ENCODE measurements at regions of chr12 and their contacts with region 1.

Region 1: GRCh38 chr12:111396726-111397445 is 8.8 kb upstream of the SH2B3 start:
- DNase-seq: peak; percentile 78 to 93 (median 86)
- ATAC-seq: peak; percentile 97
- H3K4me3 ChIP-seq: peak overlapping the region; percentile 5
- H3K4me3 Mint-ChIP-seq: peak overlapping the region; percentile 56
- H3K27ac ChIP-seq: no peak overlapping the region
- H3K27ac Mint-ChIP-seq: no peak overlapping the region
- H3K4me1 ChIP-seq: peaks cover 8% of the 10 kb centered on the region
- H3K4me1 Mint-ChIP-seq: peaks cover 5% of the 10 kb centered on the region
- H3K27me3 ChIP-seq: no peaks in the 10 kb centered on the region
- H3K27me3 Mint-ChIP-seq: no peaks in the 10 kb centered on the region
- CTCF ChIP-seq: peak; percentile 97

Region 2: DNA sequence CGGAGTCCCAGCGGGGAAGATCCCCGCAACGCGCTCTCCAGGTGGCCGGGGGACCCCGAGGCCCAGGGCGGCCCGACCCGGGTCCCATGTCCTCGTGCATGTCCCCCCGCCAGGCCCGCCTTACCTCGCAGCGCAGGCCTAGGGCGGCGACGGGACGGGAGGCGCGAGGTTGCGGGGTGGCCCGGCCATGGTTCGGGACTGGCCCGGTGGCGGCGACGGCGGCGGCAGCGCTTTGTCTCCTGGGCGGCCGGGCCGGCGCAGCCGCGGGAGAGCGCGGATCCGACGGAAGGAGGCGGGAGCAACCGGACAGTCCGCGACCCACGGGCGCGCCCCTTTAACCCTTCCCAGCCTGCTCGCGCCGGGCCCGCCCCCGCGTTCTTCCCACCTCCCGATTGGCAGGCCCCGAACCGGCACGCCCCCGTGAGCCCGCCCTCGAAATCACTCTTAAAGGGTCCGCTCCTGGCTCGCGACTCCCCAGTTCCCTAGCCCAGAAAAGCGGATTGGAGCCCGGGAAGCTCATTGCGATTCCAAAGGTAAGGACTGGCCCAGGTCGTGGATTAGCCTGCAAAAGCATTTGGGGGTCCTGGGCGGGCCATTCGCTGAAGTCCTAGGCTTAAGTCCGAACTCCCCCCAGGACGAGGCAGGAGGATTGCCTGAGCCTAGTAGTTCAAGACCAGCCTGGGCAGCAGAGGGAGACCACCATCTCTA is 27.9 kb before region 1 on chr12 and contains the start of gene PHETA1:
- CTCF ChIA-PET with region 1: interaction called, 13 read pairs
- POLR2A ChIA-PET with region 1: no interaction called
- intact Hi-C with region 1: no loop called
- DNase-seq: peak; percentile 49 to 85 (median 70)
- ATAC-seq: peak; percentile 87
- H3K4me3 ChIP-seq: peak within 1 kb of the TSS; percentile 71
- H3K4me3 Mint-ChIP-seq: peak within 1 kb of the TSS; percentile 92
- H3K27ac ChIP-seq: no peak within 1 kb of the TSS
- H3K27ac Mint-ChIP-seq: peak within 1 kb of the TSS; percentile 36
- H3K4me1 ChIP-seq: peaks cover 24% of the 10 kb centered on the region
- H3K4me1 Mint-ChIP-seq: peaks cover 21% of the 10 kb centered on the region
- H3K27me3 ChIP-seq: no peaks in the 10 kb centered on the region
- H3K27me3 Mint-ChIP-seq: no peaks in the 10 kb centered on the region
- CTCF ChIP-seq: no peak
- total RNA-seq, gene PHETA1: 1.3 to 1.7 TPM

Region 3: GRCh38 chr12:111444925-111445725 is 48.2 kb after region 1 on chr12:
- CTCF ChIA-PET with region 1: interaction called, 487 read pairs
- POLR2A ChIA-PET with region 1: interaction called, 46 read pairs
- intact Hi-C with region 1: no loop called
- DNase-seq: peak; percentile 58 to 95 (median 73)
- ATAC-seq: peak; percentile 96
- H3K4me3 ChIP-seq: peak overlapping the region; percentile 12
- H3K4me3 Mint-ChIP-seq: peak overlapping the region; percentile 65
- H3K27ac ChIP-seq: peak overlapping the region; percentile 74 to 80
- H3K27ac Mint-ChIP-seq: peak overlapping the region; percentile 82
- H3K4me1 ChIP-seq: peaks cover 76% of the 10 kb centered on the region
- H3K4me1 Mint-ChIP-seq: peaks cover 64% of the 10 kb centered on the region
- H3K27me3 ChIP-seq: no peaks in the 10 kb centered on the region
- H3K27me3 Mint-ChIP-seq: no peaks in the 10 kb centered on the region
- CTCF ChIP-seq: no peak

Region 4: DNA sequence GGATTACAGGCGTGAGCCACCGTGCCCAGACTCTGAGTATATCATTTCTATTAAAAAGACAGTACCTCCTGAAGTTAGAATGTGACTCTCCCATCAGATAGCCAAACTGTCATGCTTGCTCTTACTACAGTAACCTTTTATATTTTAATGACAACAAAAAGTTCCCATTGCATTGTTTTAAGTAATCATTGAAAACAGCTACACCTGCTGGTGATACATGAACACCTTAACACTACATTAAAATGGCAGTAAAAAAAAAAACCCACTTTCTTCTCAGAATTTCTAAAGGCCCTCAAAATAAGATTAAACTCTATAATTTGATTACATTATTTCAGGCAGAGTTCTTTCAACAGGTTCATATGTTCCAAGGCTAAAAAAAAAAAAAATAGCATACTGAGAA is 85.6 kb after region 1 on chr12:
- CTCF ChIA-PET with region 1: interaction called, 23 read pairs
- POLR2A ChIA-PET with region 1: no interaction called
- intact Hi-C with region 1: loop called in 1 of 2 experiments (anchors 1 kb)
- DNase-seq: peak in 3 of 14 experiments; percentile 20 to 25 (median 20)
- ATAC-seq: no peak
- H3K4me3 ChIP-seq: no peak overlapping the region
- H3K4me3 Mint-ChIP-seq: no peak overlapping the region
- H3K27ac ChIP-seq: no peak overlapping the region
- H3K27ac Mint-ChIP-seq: no peak overlapping the region
- H3K4me1 ChIP-seq: no peaks in the 10 kb centered on the region
- H3K4me1 Mint-ChIP-seq: no peaks in the 10 kb centered on the region
- H3K27me3 ChIP-seq: no peaks in the 10 kb centered on the region
- H3K27me3 Mint-ChIP-seq: no peaks in the 10 kb centered on the region
- CTCF ChIP-seq: no peak

Region 5: GRCh38 chr12:111673503-111673902 is 276.6 kb after region 1 on chr12:
- CTCF ChIA-PET with region 1: no interaction called
- POLR2A ChIA-PET with region 1: no interaction called
- intact Hi-C with region 1: loop called in 1 of 2 experiments (anchors 5 kb)
- DNase-seq: no peak
- ATAC-seq: no peak
- H3K4me3 ChIP-seq: no peak overlapping the region
- H3K4me3 Mint-ChIP-seq: no peak overlapping the region
- H3K27ac ChIP-seq: no peak overlapping the region
- H3K27ac Mint-ChIP-seq: no peak overlapping the region
- H3K4me1 ChIP-seq: no peaks in the 10 kb centered on the region
- H3K4me1 Mint-ChIP-seq: no peaks in the 10 kb centered on the region
- H3K27me3 ChIP-seq: no peaks in the 10 kb centered on the region
- H3K27me3 Mint-ChIP-seq: no peaks in the 10 kb centered on the region
- CTCF ChIP-seq: no peak

Measured in CD4-positive, alpha-beta T cell (primary cell).